Calu3 (cell line): ENCODE measurements at regions of chr13 and their contacts with region 1.

Region 1: DNA sequence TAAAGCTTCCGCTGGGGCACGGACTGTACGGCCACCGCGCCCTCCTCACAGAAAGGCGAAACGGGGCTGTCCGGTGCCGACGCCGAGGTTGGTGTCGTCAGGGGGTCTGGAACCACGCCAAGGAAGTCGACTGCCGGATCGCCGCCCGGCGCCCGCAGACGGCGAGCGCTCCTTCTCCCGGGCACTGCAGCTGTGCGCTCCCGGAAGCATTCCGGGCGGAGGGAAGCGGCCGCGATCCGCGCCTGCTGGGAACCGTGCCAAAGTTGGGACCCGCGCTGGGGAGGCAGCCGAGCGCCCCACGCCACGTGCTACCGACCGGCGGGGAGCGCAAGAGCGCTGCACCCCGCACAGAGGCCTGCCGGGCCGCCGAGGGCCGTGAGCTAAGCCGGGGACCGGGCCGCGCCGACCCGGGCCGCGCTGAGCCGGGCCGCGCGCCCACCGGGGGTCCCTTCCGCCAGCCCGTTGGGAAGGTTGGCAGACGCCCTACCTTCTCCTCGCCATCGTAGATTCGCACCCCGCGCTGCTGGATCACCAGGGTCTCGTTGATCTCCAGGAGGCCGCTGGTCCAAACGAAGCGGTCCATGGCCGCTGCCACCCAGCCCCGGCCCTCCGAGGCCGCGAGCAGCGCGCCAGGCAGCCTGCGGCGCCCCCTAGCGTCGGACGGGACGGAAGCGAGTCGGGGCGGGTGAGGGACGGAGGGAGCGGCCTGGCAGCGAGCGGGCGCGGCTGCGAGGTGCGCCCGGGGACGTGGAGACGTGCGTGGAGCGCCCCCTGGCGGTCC is at the start of gene VPS36:
- DNase-seq: peak; percentile 98
- H3K4me3 Mint-ChIP-seq: peak within 1 kb of the TSS; percentile 82
- H3K27ac Mint-ChIP-seq: peak within 1 kb of the TSS; percentile 71
- H3K4me1 Mint-ChIP-seq: peaks cover 25% of the 10 kb centered on the region
- H3K27me3 Mint-ChIP-seq: no peaks in the 10 kb centered on the region
- CTCF ChIP-seq: peak; percentile 96
- total RNA-seq, gene VPS36: 39.8 and 40.2 TPM in 2 replicates

Region 2: DNA sequence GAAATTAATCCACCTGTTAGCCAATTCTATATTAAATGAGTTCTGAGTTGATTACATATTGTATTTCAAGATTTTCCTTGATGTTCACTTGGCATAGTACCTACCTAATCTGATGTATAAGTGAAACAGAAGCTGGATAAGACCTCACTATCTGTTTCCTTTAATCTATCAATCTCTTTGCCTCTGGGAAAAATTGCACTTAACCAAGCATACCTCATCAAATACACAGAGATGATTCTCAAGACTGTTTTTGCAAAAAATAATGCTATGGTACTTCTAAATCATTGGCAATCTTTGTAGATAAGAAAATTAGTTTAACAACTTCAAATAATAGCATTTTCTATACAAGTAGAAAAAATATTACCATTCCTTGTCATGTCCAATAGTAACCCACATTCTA is 1055.5 kb before region 1 on chr13:
- CTCF ChIA-PET with region 1: no interaction called
- intact Hi-C with region 1: no loop called
- DNase-seq: no peak
- H3K4me3 Mint-ChIP-seq: no peak overlapping the region
- H3K27ac Mint-ChIP-seq: no peak overlapping the region
- H3K4me1 Mint-ChIP-seq: no peaks in the 10 kb centered on the region
- H3K27me3 Mint-ChIP-seq: no peaks in the 10 kb centered on the region
- CTCF ChIP-seq: no peak

Region 3: GRCh38 chr13:52348071-52348470 is 102.1 kb before region 1 on chr13:
- CTCF ChIA-PET with region 1: interaction called, 20 read pairs
- intact Hi-C with region 1: loop called (anchors 1 kb)
- DNase-seq: no peak
- H3K4me3 Mint-ChIP-seq: no peak overlapping the region
- H3K27ac Mint-ChIP-seq: no peak overlapping the region
- H3K4me1 Mint-ChIP-seq: peaks cover 10% of the 10 kb centered on the region
- H3K27me3 Mint-ChIP-seq: no peaks in the 10 kb centered on the region
- CTCF ChIP-seq: no peak

Region 4: DNA sequence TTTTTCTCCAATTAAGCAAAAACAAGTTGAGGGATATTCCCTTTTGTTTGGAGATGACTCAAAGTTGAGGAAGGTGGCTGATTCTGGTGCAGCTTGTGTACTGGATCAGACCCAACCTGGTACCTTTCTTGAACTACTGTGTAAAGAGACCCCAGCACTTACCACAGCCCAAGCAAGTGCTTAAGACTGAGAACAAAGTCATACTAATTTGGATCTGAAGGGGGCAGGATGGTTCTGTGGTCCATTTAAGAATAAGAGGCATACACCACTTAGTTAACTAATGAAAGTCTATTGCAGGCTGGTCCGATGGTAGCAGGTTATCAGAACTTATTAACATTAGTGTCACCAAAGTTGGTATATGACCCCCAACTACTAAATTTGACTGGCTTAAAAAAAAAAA is 50.5 kb before region 1 on chr13:
- CTCF ChIA-PET with region 1: no interaction called
- intact Hi-C with region 1: loop called (anchors 2 kb)
- DNase-seq: no peak
- H3K4me3 Mint-ChIP-seq: no peak overlapping the region
- H3K27ac Mint-ChIP-seq: no peak overlapping the region
- H3K4me1 Mint-ChIP-seq: no peaks in the 10 kb centered on the region
- H3K27me3 Mint-ChIP-seq: peaks cover 17% of the 10 kb centered on the region
- CTCF ChIP-seq: no peak

Region 5: GRCh38 chr13:52411629-52412028 is 38.6 kb before region 1 on chr13:
- CTCF ChIA-PET with region 1: interaction called, 10 read pairs
- intact Hi-C with region 1: loop called (anchors 5 kb)
- DNase-seq: peak; percentile 24
- H3K4me3 Mint-ChIP-seq: peak overlapping the region; percentile 57
- H3K27ac Mint-ChIP-seq: peak overlapping the region; percentile 88
- H3K4me1 Mint-ChIP-seq: peaks cover 19% of the 10 kb centered on the region
- H3K27me3 Mint-ChIP-seq: no peaks in the 10 kb centered on the region
- CTCF ChIP-seq: no peak

Region 6: DNA sequence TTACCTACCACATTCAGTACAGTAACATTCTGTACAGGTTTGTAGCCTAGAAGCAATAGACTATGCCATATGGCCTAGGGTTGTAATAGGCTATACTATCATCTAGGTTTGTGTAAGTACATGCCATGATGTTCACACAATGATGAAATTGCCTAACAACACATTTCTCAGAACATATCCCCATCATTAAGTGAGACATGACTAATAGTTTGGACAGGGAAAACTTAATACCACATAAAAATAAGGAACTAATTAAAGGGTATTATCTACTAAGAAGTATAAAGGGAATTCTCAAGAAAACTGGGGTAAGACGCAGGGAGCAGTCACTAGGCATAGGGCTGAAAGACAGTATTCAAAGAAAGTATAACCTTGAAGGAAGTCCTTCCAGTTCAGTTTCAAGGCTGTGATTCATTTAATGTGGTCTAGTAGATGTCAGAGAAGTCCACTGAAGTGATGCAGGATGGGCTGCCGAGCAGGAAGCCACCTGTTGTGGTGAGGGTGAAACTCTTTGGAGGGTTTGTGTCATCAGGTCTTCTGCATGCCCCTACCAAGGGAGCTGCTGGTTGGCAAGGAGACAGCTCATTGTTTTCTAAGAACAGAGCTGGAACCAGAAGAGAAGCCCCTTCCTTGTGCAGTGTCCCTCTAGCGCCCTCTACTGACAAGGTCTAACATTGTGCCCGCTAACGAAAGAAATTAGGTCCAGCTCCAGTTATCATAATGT is 701.3 kb after region 1 on chr13:
- CTCF ChIA-PET with region 1: no interaction called
- intact Hi-C with region 1: no loop called
- DNase-seq: peak; percentile 14
- H3K4me3 Mint-ChIP-seq: no peak overlapping the region
- H3K27ac Mint-ChIP-seq: no peak overlapping the region
- H3K4me1 Mint-ChIP-seq: no peaks in the 10 kb centered on the region
- H3K27me3 Mint-ChIP-seq: no peaks in the 10 kb centered on the region
- CTCF ChIP-seq: peak; percentile 40